Left ventricle myocardium superior (tissue), 1 donor: ENCODE measurements at regions of chr4 and their contacts with region 1.

Region 1: DNA sequence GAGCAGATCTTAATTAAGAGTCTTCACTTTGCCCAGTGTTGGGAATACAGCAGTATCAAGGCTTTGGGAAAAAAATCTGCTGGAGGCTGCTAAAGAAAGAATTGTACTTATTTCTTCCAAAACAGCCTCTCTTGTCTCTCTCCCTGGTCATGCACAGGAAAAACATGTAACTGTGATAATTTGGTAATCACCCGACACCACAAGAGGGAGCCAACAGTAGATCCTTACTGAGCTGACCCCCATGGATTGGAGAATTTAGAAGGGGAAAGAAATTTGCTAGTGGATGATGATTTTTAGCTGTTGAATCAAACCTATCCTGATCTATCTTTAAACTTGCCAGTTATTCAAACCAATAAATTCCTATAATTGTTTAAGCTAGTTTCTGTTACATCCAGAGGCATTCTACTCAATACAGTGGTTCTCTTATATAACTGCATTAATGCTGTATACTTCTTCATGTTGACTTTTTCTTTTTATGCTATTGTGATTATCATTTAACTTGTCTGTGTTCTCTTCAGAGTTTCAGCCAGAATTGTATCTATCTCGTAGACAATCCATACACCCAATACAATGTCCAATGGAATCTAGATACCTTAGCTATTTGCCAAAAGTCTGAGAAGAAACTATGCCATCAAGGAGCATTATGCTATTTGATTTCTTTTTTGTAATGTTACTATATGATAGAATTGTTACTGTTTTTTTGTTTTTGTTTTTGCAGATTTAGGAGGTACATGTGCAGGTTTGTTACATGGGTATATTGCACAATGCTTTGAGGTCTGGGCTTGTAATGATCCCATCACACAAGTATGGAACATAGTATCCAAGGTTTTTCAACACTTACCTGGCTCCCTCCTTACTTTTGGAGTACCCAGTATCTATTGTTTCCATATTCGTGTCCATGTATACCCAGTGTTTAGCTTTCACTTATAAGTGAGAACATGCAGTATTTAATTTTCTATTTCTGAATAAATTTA is 31.3 kb upstream of the ARHGEF38 start:
- DNase-seq: no peak
- ATAC-seq: peak; percentile 56

Region 2: DNA sequence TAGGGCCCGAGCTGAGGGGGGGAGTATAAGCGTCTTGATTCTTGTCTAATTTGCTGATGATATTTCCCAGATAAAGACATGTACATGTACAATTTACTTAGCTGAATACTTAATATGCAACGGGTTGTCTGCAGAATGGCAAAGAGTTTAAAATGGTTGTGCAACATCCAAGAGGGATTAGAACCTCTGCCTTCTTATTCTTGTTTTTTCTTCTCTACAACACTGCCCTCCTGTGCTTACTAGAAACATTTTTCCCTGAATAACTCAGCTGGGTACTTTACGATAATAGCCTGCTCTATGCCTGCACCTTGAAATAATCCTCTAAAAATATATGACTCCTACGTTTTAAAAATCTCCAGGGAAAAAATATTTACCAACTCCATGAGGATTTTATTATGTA is 145.6 kb after region 1 on chr4:
- intact Hi-C with region 1: loop called (anchors 5 kb)
- DNase-seq: no peak
- ATAC-seq: peak; percentile 59